Activated CD4-positive, alpha-beta T cell treated with anti-CD3 and anti-CD28 coated beads for 36 hours (primary cell): ENCODE measurements at regions of chr15 and their contacts with region 1.

Region 1: GRCh38 chr15:80989518-80990478 is at the start of gene MESD:
- DNase-seq: peak; percentile 99
- ATAC-seq: peak; percentile 99
- H3K4me3 Mint-ChIP-seq: peak within 1 kb of the TSS; percentile 94
- H3K27ac Mint-ChIP-seq: peak within 1 kb of the TSS; percentile 89
- H3K4me1 Mint-ChIP-seq: peaks cover 50% of the 10 kb centered on the region
- H3K27me3 Mint-ChIP-seq: no peaks in the 10 kb centered on the region
- total RNA-seq, gene MESD: 18.6 to 21.7 TPM

Region 2: DNA sequence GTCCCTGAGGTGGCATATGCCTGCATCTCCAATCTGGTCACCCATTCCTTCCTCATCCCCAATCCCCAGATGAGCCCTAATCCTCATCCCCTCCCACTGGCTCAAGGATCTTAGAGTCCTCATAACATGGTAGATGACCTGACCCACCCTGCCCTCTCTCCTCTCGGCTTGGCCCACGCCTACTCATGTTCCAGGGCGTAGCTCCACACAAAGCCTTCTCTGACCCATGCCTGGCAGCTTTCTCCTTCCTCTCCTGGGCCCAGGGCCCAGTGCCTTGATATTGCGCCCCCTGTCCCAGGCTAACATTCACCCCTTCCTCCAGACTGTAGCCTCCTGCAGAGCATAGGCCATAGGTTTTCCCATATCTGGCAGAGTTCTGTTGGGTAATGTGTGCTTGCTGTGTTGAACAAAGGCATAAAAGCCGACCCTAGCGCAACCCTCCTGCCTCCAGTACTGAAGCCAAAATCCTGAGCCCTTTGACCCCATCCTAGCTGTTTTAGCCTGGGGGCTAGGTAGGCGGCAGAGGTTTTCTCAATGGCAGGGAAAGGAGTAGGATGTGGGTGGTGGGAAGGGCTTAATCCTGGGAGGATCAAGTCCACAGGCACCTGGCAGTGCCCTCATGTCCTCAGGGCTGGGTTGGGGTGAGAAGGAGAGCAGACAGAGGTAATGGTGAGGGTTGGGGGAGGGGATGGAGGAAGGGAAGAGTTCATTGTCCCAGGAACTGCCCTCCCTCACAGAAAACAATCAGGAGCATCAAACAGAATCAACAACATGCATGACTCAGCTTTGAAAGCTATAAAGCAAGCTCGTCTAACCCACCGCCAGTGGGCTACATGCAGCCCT is 35.6 kb before region 1 on chr15:
- CTCF ChIA-PET with region 1: no interaction called
- POLR2A ChIA-PET with region 1: no interaction called
- intact Hi-C with region 1: loop called in 1 of 2 experiments (anchors 1 kb)
- DNase-seq: no peak
- ATAC-seq: no peak
- H3K4me3 Mint-ChIP-seq: no peak overlapping the region
- H3K27ac Mint-ChIP-seq: no peak overlapping the region
- H3K4me1 Mint-ChIP-seq: peaks cover 24% of the 10 kb centered on the region
- H3K27me3 Mint-ChIP-seq: no peaks in the 10 kb centered on the region

Region 3: GRCh38 chr15:81000624-81001151 is 10.9 kb after region 1 on chr15 and contains the start of gene TLNRD1:
- CTCF ChIA-PET with region 1: interaction called, 8 read pairs
- POLR2A ChIA-PET with region 1: interaction called, 6 read pairs
- intact Hi-C with region 1: loop called (anchors 1 kb)
- DNase-seq: peak; percentile 90
- ATAC-seq: peak; percentile 70
- H3K4me3 Mint-ChIP-seq: peak within 1 kb of the TSS; percentile 92
- H3K27ac Mint-ChIP-seq: peak within 1 kb of the TSS; percentile 92
- H3K4me1 Mint-ChIP-seq: peaks cover 45% of the 10 kb centered on the region
- H3K27me3 Mint-ChIP-seq: no peaks in the 10 kb centered on the region
- total RNA-seq, gene TLNRD1: 11.2 to 16.9 TPM

Region 4: GRCh38 chr15:81400640-81401236 is 410.9 kb after region 1 on chr15:
- CTCF ChIA-PET with region 1: no interaction called
- POLR2A ChIA-PET with region 1: no interaction called
- intact Hi-C with region 1: loop called in 1 of 2 experiments (anchors 10 kb)
- DNase-seq: no peak
- ATAC-seq: peak; percentile 44
- H3K4me3 Mint-ChIP-seq: no peak overlapping the region
- H3K27ac Mint-ChIP-seq: no peak overlapping the region
- H3K4me1 Mint-ChIP-seq: peaks cover 3% of the 10 kb centered on the region
- H3K27me3 Mint-ChIP-seq: no peaks in the 10 kb centered on the region